ENCODE measurements at regions of chr6 and their contacts with region 1.

Region 1: DNA sequence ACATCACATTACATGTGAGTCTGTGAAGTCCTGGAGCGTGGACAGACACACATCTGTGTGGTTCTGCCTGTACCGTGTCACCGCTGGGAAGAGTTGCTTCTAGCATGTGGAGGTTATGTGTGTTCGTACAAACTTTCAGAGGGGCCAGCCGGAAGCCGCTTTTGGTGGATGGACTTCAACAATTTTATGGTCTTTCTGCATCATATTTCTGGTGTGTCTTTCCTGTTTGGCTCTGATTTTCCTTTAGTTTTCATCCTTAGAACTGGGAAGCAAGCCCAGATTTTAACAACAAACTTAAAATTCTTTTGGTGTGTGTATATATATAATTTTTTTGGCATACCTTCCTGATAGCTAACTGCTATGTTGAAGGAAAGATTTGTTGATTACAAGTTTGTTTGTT is 71.2 kb downstream of the TIAM2 start:
- DNase-seq: no peak
- H3K4me3 Mint-ChIP-seq: no peak overlapping the region
- H3K27ac Mint-ChIP-seq: no peak overlapping the region
- H3K4me1 Mint-ChIP-seq: no peaks in the 10 kb centered on the region
- H3K27me3 Mint-ChIP-seq: no peaks in the 10 kb centered on the region

Region 2: GRCh38 chr6:155041741-155042279 is 24.6 kb before region 1 on chr6:
- CTCF ChIA-PET with region 1: interaction called, 3 read pairs
- POLR2A ChIA-PET with region 1: interaction called, 18 read pairs
- DNase-seq: no peak
- H3K4me3 Mint-ChIP-seq: no peak overlapping the region
- H3K27ac Mint-ChIP-seq: no peak overlapping the region
- H3K4me1 Mint-ChIP-seq: no peaks in the 10 kb centered on the region
- H3K27me3 Mint-ChIP-seq: no peaks in the 10 kb centered on the region